HEK293T (cell line): ENCODE measurements at regions of chr6 and their contacts with region 1.

Region 1: DNA sequence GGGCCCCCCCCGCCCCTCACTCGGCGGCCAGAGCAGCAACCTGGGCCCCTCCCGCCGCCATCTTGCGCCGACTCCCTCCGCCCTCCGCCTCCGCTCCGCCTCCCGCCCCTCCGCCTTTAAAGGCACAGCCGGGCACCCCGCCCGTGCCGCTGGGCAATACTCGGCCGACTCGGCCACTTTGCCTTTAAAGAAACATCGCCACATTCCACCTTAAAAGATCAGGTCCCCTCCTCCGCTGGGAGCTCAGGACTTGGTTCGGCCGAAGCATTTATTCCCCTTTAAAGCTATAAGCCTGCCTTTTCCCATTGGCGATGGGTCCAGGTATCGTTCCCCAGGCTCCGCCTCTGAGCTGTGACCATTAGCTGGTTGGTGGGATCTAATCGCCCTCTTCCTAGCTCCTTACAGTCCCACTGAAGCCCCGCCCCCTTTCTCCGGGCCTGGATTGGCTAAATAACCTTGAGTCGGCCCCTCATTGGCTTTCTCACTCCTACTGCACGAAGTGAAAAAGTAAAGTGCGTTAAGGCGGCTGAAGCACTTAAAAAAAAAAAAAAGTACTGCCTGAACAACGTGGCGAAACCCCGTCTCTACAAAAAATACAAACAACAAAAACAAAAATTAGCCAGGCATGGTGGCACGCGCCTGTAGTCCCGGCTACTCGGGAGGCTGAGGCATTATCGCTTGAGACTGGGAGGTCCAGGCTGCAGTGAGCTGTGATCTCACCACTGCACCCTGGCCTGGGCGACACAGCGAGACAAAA is at the start of gene ZBTB22:
- DNase-seq: peak; percentile 87

Region 2: GRCh38 chr6:33172688-33173534 is 144.9 kb before region 1 on chr6:
- CTCF ChIA-PET with region 1: no interaction called
- POLR2A ChIA-PET with region 1: no interaction called
- DNase-seq: peak; percentile 36

Region 3: DNA sequence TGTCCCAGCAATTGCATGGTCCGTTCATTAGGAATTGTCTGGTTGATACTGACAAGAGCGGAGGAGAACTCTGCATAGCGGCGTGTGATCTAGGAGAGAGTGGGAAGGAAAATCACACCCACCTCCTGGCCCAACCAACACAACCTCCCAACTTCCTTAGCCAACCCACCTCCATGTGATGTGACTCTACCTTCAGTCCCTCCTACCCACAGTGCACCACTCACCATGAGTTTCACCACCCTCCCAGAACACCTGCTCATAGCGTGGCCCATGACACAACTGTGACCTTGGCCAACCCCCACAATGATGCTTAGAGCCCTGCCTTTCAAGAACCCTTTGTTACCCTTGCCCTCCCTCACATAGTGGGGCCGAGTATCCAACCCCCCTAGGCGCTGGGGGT is 53.8 kb before region 1 on chr6:
- CTCF ChIA-PET with region 1: no interaction called
- POLR2A ChIA-PET with region 1: no interaction called
- DNase-seq: no peak

Region 4: GRCh38 chr6:33288921-33289748 is 28.7 kb before region 1 on chr6 and contains the starts of genes PFDN6 and WDR46:
- CTCF ChIA-PET with region 1: no interaction called
- POLR2A ChIA-PET with region 1: interaction called, 13 read pairs
- DNase-seq: peak; percentile 86

Region 5: DNA sequence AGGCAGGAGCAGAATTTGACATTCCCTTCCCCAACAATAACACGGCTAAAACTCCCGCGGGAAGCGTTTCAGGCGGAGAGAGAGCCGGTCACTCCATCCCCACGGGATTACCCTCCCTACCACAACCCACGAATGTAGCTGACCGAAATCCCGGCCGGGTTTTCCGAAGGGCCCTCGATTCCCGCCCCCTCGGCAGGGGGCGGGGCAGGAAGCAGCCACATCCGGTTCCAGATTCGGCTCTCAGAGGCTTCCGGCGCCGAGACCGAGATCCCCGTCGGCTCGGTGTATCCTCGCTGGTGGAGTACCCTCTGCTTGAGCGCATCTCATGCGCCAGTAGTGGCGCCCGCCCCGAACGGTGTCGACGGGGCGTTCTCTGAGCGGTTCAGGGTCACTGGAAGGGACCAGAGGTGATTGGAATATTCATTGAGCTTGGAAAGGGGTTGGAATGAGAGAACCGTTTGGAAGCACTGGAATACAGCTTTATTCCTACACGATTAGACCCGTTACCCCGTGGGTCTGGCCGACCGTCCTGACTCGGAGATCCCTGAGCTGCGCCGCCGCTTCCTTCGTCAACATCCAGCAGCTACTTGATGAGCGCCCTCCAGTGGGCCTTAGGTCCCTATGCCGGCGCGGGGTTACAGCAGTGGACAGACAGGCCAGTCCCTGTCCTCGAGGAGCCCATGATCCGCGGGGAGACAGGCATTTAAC is 18.5 kb before region 1 on chr6:
- CTCF ChIA-PET with region 1: interaction called, 5 read pairs
- POLR2A ChIA-PET with region 1: interaction called, 46 read pairs
- DNase-seq: peak; percentile 86

Region 6: DNA sequence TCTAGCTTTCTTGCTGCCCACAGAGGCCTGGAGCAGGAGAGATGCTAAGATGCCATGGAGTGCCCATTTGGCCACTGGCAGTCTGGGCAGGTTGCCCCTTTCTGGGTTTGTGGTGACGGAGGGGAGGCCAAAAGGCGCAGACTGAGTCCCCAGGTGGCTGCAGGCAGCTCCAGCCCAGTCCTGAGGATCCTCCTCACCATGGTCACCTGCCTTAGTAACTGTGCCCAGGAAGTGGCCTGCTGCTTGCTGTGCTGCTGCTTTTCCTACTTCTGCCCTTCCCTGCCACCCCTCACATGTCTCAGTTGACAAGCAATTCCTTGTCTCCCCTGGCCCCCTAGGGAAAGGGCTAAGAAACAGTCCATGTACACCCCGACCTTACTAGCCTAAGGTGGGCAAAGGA is 38.4 kb after region 1 on chr6:
- CTCF ChIA-PET with region 1: no interaction called
- POLR2A ChIA-PET with region 1: no interaction called
- DNase-seq: no peak

Region 7: GRCh38 chr6:33367009-33367714 is 49.3 kb after region 1 on chr6:
- CTCF ChIA-PET with region 1: interaction called, 10 read pairs
- POLR2A ChIA-PET with region 1: interaction called, 5 read pairs
- DNase-seq: no peak

Region 8: DNA sequence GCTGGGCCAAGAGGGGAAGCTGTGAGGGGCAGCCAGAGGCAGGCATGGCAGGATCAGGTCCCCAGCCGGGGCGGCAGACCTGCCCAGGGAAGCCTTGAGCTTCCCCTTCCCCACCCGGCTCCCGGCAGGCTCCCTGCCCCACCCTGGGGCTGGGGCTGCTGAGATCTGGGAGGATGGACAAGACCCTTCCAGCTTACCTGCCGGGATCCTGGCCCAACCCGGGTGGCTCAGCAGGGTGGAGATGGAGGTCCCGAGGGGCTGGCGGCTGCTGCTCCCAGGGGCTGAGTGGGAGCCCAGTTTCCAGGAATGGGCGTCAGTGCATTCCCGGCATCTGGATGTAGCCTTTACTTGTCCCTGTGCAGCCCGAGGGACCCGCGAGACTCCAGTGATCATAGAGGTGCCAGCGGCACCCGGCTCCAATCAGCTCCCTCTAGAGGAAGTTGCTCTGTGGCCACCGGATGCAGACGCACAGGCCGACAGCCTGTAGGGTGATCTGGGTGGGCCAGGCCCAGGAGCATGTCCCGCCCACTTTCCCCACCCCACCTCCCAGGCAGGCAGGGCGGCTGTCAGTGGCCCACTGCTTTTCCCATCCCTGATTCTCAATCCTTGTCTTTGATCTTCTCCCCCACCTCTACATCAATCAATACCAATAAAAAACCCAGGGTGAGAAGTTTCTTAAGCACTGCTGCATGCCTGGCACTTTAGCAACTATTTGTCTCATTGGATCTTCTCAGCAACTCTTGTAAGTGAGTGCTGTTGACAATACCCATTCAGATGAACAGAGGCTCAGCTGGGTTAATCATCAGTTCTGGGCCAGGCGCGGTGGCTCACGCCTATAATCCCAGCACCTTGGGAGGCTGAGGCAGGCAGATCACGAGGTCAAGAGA is 262.2 kb after region 1 on chr6 and contains the start of gene BAK1:
- CTCF ChIA-PET with region 1: no interaction called
- POLR2A ChIA-PET with region 1: no interaction called
- DNase-seq: peak; percentile 90